ENCODE measurements at regions of chr16 and their contacts with region 1.

Region 1: DNA sequence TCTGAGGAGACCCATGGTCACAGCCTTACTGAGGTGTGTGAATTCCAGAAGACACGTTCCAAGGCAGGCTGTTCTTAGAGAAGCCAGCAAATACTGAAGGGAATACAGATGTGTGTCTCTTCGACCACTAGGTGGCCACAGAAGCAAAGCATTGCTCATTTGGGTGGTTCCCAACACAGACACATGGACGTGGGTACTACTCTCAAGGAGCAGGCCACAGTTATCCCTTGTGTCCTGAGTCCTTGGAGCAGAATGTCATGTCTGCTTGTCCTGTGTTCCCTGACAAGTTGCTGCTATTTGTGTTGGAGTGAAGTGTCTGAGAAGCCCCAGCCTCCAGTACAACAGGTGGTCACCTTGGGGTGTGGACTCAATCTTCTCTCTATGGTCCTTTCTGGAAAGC is 30.3 kb downstream of the HMOX2 start:
- DNase-seq: peak; percentile 66 to 73 (median 68)
- H3K4me3 ChIP-seq: peak overlapping the region in 1 of 2 donors; percentile 57
- H3K4me3 Mint-ChIP-seq: peak overlapping the region; percentile 49 to 94 (median 80)
- H3K27ac ChIP-seq: peak overlapping the region; percentile 77
- H3K27ac Mint-ChIP-seq: peak overlapping the region; percentile 96 to 100 (median 99)
- H3K4me1 ChIP-seq: peaks cover 67% of the 10 kb centered on the region
- H3K4me1 Mint-ChIP-seq: peaks cover 40 to 77% (median 60%) of the 10 kb centered on the region in 4 donors
- H3K27me3 ChIP-seq: no peaks in the 10 kb centered on the region
- H3K27me3 Mint-ChIP-seq: no peaks in the 10 kb centered on the region

Region 2: DNA sequence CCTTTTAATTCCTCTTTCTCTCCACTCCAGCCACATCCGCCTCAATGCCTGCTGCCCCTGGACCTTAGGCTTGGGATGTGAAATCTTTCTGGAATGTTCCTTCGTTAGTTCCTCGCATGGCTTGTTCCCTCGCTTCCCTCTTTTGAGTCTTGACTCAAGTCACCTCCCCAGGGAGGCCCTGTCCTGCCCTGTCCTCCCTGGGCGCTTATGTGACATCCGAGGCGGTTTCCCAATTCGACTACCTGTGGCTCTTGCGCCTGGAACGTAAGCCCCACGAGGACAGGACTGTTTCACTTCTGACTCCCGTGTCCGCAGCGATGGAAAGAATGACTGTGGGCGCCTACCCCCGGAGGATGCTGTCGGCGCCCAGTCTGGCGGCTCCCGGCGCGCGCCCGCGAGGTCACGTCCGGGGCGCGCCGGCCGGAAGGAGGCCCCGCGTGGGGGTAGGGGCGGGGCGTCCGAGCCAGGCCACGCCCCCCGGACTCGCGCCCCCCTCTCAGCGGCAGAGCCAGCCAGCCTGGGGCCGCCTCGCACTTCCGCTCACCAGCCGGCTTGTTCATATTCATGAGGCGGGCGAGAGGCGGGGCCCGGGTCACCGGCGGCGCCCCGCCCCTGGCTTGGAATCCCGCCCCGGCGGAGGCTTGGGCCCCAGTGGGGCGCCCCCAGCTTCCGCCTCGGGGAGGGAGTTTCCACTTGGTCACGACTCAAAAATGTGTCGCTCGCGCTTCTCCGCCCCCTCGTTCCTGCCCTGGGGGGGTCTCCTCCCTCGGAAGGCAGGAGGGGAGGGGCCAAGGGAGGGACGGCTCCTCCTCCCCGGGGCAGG is 199.0 kb before region 1 on chr16:
- CTCF ChIA-PET with region 1: no interaction called
- POLR2A ChIA-PET with region 1: no interaction called
- intact Hi-C with region 1: no loop called
- DNase-seq: peak; percentile 97 to 99 (median 98)
- H3K4me3 ChIP-seq: peak overlapping the region; percentile 47 to 85
- H3K4me3 Mint-ChIP-seq: peak overlapping the region; percentile 87 to 97 (median 92)
- H3K27ac ChIP-seq: peak overlapping the region; percentile 76
- H3K27ac Mint-ChIP-seq: peak overlapping the region; percentile 96 to 100 (median 99)
- H3K4me1 ChIP-seq: peaks cover 18% of the 10 kb centered on the region
- H3K4me1 Mint-ChIP-seq: peaks cover 17 to 33% (median 20%) of the 10 kb centered on the region in 4 donors
- H3K27me3 ChIP-seq: no peaks in the 10 kb centered on the region
- H3K27me3 Mint-ChIP-seq: no peaks in the 10 kb centered on the region

Region 3: GRCh38 chr16:4371357-4372000 is 135.0 kb before region 1 on chr16 and contains the start of gene VASN:
- CTCF ChIA-PET with region 1: no interaction called
- POLR2A ChIA-PET with region 1: no interaction called
- intact Hi-C with region 1: no loop called
- DNase-seq: peak; percentile 69 to 78 (median 71)
- H3K4me3 ChIP-seq: peak within 1 kb of the TSS in 1 of 2 donors; percentile 42
- H3K4me3 Mint-ChIP-seq: peak within 1 kb of the TSS; percentile 77 to 90 (median 84)
- H3K27ac ChIP-seq: peak within 1 kb of the TSS; percentile 36
- H3K27ac Mint-ChIP-seq: peak within 1 kb of the TSS; percentile 70 to 93 (median 81)
- H3K4me1 ChIP-seq: peaks cover 40% of the 10 kb centered on the region
- H3K4me1 Mint-ChIP-seq: peaks cover 11 to 54% (median 28%) of the 10 kb centered on the region in 4 donors
- H3K27me3 ChIP-seq: no peaks in the 10 kb centered on the region
- H3K27me3 Mint-ChIP-seq: no peaks in the 10 kb centered on the region
- total RNA-seq, gene VASN: 0.11 to 0.29 TPM

Region 4: GRCh38 chr16:4475880-4476788 is 30.3 kb before region 1 on chr16 and contains the start of gene HMOX2:
- CTCF ChIA-PET with region 1: interaction called, 343 read pairs
- POLR2A ChIA-PET with region 1: interaction called, 247 read pairs
- intact Hi-C with region 1: loop called (anchors 1 kb)
- DNase-seq: peak; percentile 90 to 95 (median 92)
- H3K4me3 ChIP-seq: peak within 1 kb of the TSS; percentile 86 to 91
- H3K4me3 Mint-ChIP-seq: peak within 1 kb of the TSS; percentile 92 to 95 (median 94)
- H3K27ac ChIP-seq: peak within 1 kb of the TSS; percentile 76
- H3K27ac Mint-ChIP-seq: peak within 1 kb of the TSS; percentile 90 to 96 (median 95)
- H3K4me1 ChIP-seq: peaks cover 60% of the 10 kb centered on the region
- H3K4me1 Mint-ChIP-seq: peaks cover 26 to 55% (median 38%) of the 10 kb centered on the region in 4 donors
- H3K27me3 ChIP-seq: no peaks in the 10 kb centered on the region
- H3K27me3 Mint-ChIP-seq: no peaks in the 10 kb centered on the region
- total RNA-seq, gene HMOX2: 64.1 to 72.4 TPM

Region 5: GRCh38 chr16:4538350-4539235 is 32.1 kb after region 1 on chr16 and contains the start of gene CDIP1:
- CTCF ChIA-PET with region 1: interaction called, 12 read pairs
- POLR2A ChIA-PET with region 1: interaction called, 36 read pairs
- intact Hi-C with region 1: loop called (anchors 1 kb)
- DNase-seq: peak; percentile 89 to 94 (median 90)
- H3K4me3 ChIP-seq: peak within 1 kb of the TSS; percentile 69 to 92
- H3K4me3 Mint-ChIP-seq: peak within 1 kb of the TSS; percentile 82 to 89 (median 84)
- H3K27ac ChIP-seq: peak within 1 kb of the TSS; percentile 77
- H3K27ac Mint-ChIP-seq: peak within 1 kb of the TSS; percentile 89 to 97 (median 94)
- H3K4me1 ChIP-seq: peaks cover 30% of the 10 kb centered on the region
- H3K4me1 Mint-ChIP-seq: peaks cover 18 to 35% (median 27%) of the 10 kb centered on the region in 4 donors
- H3K27me3 ChIP-seq: no peaks in the 10 kb centered on the region
- H3K27me3 Mint-ChIP-seq: no peaks in the 10 kb centered on the region
- total RNA-seq, gene CDIP1: 19.0 to 21.1 TPM

Region 6: GRCh38 chr16:4580245-4580644 is 73.8 kb after region 1 on chr16:
- CTCF ChIA-PET with region 1: interaction called, 57 read pairs
- POLR2A ChIA-PET with region 1: interaction called, 13 read pairs
- intact Hi-C with region 1: loop called (anchors 1 kb)
- DNase-seq: no peak
- H3K4me3 ChIP-seq: no peak overlapping the region
- H3K4me3 Mint-ChIP-seq: no peak overlapping the region
- H3K27ac ChIP-seq: no peak overlapping the region
- H3K27ac Mint-ChIP-seq: no peak overlapping the region
- H3K4me1 ChIP-seq: no peaks in the 10 kb centered on the region
- H3K4me1 Mint-ChIP-seq: no peaks in the 10 kb centered on the region
- H3K27me3 ChIP-seq: no peaks in the 10 kb centered on the region
- H3K27me3 Mint-ChIP-seq: no peaks in the 10 kb centered on the region

Region 7: DNA sequence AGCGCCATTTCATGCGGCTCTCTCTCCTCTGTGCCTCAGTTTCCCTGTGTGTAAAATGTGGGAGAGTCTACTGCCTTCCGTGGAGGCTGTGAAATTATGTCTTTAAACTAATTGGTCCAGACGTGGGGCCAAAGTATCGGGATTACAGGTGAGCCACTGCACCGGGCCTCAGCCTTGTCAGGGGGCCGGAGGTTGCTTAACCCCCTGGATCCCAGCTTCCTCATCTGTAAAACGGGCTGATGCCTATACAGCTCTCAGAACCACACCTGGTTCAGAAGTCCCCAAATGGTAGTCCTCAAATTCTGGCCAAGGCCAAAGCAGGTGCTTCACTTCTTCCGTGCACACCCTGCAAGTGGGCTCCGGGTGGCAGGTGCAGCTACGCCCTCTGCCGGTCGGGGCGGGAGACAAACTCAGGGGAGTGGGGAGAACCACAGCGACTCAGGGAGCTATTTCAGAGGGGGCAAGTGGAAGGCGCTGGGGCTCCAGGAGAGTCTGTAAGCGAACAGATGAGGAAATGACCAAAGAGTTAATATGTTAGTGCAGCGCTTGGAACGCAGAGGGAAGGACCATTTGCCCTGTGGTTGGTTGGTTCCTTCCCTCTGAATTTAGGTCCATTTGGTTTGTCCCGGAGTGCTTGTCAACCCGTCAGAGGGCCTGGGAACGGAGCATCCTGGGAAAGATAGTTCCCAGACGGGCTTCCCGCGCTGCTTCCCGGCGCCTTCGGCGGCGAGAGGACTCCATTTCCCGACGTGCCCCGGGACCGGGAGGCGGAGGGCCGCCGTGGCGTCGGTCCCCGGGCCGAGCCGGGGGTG is 117.8 kb after region 1 on chr16 and contains the start of gene MGRN1:
- CTCF ChIA-PET with region 1: interaction called, 8 read pairs
- POLR2A ChIA-PET with region 1: interaction called, 5 read pairs
- intact Hi-C with region 1: loop called (anchors 1 kb)
- DNase-seq: peak; percentile 93 to 95 (median 94)
- H3K4me3 ChIP-seq: peak within 1 kb of the TSS; percentile 38 to 81
- H3K4me3 Mint-ChIP-seq: peak within 1 kb of the TSS; percentile 92 to 99 (median 95)
- H3K27ac ChIP-seq: peak within 1 kb of the TSS; percentile 94
- H3K27ac Mint-ChIP-seq: peak within 1 kb of the TSS; percentile 92 to 100 (median 99)
- H3K4me1 ChIP-seq: peaks cover 25% of the 10 kb centered on the region
- H3K4me1 Mint-ChIP-seq: peaks cover 20 to 46% (median 34%) of the 10 kb centered on the region in 4 donors
- H3K27me3 ChIP-seq: no peaks in the 10 kb centered on the region
- H3K27me3 Mint-ChIP-seq: no peaks in the 10 kb centered on the region
- total RNA-seq, gene MGRN1: 62.2 to 64.1 TPM

Measured in CD4-positive, alpha-beta memory T cell (primary cell).